ENCODE measurements at regions of chr7 and their contacts with region 1.

Region 1: DNA sequence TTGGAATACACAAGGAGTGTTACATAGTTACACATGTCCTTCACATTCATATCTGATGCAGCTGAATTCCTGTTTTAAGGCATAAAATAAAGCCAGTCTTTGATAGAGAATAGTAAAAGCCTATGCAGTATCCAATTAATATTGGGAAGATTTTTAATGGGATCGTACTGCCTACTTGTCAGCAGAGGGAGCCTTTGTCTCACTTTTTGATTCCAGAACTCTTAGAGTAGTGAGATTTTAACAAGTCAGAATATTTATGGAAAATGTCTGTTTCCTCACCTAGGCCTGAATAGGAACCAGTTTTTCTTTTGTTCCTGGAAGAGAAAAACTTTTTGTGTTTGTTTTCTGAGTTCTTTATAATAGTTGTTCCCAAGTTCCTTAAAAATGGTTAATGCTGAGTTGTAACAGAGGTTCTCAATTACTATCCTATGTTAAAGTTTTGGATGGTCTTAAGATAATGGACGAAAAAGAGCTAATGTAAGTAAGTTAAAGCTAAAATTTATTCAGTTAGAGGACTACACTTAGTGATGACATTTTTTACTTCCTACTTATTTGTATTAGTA is 114.0 kb downstream of the BBS9 start:
- DNase-seq: peak; percentile 24
- H3K4me3 ChIP-seq: no peak overlapping the region
- H3K27ac ChIP-seq: no peak overlapping the region
- H3K4me1 ChIP-seq: no peaks in the 10 kb centered on the region
- CTCF ChIP-seq: peak; percentile 77

Region 2: GRCh38 chr7:32490127-32490822 is 753.1 kb before region 1 on chr7 and contains the start of gene LSM5:
- CTCF ChIA-PET with region 1: no interaction called
- POLR2A ChIA-PET with region 1: no interaction called
- intact Hi-C with region 1: no loop called
- DNase-seq: peak; percentile 96
- H3K4me3 ChIP-seq: peak within 1 kb of the TSS; percentile 84
- H3K27ac ChIP-seq: peak within 1 kb of the TSS; percentile 94
- H3K4me1 ChIP-seq: peaks cover 26% of the 10 kb centered on the region
- CTCF ChIP-seq: no peak
- total RNA-seq, gene LSM5: 33.8 and 38.9 TPM in 2 replicates

Region 3: GRCh38 chr7:33114976-33115375 is 128.4 kb before region 1 on chr7:
- CTCF ChIA-PET with region 1: no interaction called
- POLR2A ChIA-PET with region 1: no interaction called
- intact Hi-C with region 1: no loop called
- DNase-seq: no peak
- H3K4me3 ChIP-seq: no peak overlapping the region
- H3K27ac ChIP-seq: no peak overlapping the region
- H3K4me1 ChIP-seq: peaks cover 4% of the 10 kb centered on the region
- CTCF ChIP-seq: no peak

Region 4: DNA sequence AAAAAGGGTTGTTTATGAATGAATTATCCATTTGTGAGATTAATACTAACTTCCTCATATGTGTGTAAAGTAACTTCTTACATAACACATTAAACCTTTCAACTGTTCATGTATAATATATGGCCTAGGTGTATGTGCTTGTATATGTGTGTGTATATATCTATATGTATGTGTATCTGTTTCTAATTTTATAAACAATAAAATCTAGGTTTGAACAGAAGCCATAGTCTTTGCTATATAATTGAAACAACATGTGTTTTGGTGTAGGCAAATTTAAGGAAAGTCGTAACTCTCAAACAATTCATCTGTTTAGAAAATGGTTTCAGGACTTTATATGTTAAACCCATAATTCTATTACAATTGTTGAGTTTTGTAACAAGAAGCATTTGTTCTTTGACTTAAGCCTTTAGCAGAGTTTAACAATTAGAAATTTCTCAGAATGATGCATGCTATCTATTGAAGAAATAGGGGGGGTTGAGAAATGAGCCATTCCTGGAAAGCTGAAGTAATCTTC is 10.7 kb before region 1 on chr7:
- CTCF ChIA-PET with region 1: no interaction called
- POLR2A ChIA-PET with region 1: no interaction called
- intact Hi-C with region 1: no loop called
- DNase-seq: no peak
- H3K4me3 ChIP-seq: no peak overlapping the region
- H3K27ac ChIP-seq: no peak overlapping the region
- H3K4me1 ChIP-seq: no peaks in the 10 kb centered on the region
- CTCF ChIP-seq: no peak

Region 5: GRCh38 chr7:33448035-33448434 is 204.6 kb after region 1 on chr7:
- CTCF ChIA-PET with region 1: no interaction called
- POLR2A ChIA-PET with region 1: no interaction called
- intact Hi-C with region 1: no loop called
- DNase-seq: no peak
- H3K4me3 ChIP-seq: no peak overlapping the region
- H3K27ac ChIP-seq: no peak overlapping the region
- H3K4me1 ChIP-seq: no peaks in the 10 kb centered on the region
- CTCF ChIP-seq: no peak

Region 6: DNA sequence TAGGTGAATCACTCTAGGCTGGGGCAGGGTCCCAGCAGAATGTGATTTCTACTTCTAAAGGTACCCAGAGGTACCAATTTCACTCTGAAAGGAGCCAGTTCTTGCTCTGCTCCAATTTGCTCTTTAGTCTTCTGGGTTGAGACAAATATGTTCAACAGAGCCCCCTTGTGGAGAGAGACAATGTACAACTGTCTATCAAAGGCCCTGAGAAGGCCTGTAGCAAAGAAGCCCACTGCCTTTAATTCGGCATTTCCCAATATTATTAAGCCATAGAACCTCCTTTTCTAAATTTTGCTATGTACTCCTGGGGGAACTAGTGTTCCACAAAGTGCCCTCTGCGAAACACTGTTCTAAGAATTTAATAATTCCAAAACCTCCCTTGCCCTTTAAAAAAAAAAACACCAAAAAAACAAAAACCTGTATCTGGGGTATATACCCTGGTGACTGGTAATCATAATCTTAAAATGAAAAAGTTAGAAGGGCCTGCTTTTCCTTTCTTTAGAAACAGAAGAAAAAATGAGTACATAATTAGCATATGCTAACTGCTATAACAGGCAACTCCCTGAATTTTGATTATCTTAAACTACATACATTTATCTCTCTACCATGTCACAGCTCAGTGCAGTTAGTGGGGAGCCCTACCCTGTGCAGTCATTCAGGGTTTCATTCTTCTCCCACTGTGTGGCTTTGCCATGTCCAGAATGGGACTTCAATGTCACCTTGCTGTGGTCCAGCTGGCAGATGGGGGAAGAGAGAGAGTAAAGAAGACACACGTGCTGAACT is 501.1 kb after region 1 on chr7:
- CTCF ChIA-PET with region 1: no interaction called
- POLR2A ChIA-PET with region 1: no interaction called
- intact Hi-C with region 1: loop called (anchors 10 kb)
- DNase-seq: peak; percentile 69
- H3K4me3 ChIP-seq: no peak overlapping the region
- H3K27ac ChIP-seq: no peak overlapping the region
- H3K4me1 ChIP-seq: no peaks in the 10 kb centered on the region
- CTCF ChIP-seq: peak; percentile 81

Measured in OCI-LY7 (cell line).